ENCODE measurements at regions of chr15 and their contacts with region 1.

Region 1: DNA sequence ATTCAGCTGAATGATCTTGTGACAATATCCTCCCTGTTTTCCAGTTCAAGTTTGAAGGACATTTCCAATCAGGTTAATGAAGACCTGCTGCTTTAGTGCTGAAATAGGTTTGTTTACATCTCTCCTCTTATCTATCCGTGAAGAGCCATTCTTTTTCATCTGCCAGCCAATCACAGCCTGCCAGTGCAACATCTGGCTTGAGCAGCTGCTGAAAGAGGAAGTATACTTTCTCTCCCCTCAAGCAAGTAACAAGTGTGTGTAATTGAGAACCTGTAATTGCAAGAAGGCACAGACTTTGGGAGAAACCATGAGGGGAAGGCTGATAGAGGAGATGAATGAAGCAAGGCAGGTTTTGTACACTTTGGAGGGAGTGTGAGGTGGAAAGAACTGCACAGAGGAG is 404.3 kb downstream of the AGBL1 start:
- DNase-seq: no peak
- ATAC-seq: no peak
- H3K4me3 ChIP-seq: no peak overlapping the region
- H3K27ac ChIP-seq: no peak overlapping the region
- H3K4me1 ChIP-seq: no peaks in the 10 kb centered on the region
- H3K27me3 ChIP-seq: no peaks in the 10 kb centered on the region
- CTCF ChIP-seq: no peak
- EP300 ChIP-seq: no peak
- POLR2A ChIP-seq: no peak
- RAD21 ChIP-seq: no peak

Region 2: DNA sequence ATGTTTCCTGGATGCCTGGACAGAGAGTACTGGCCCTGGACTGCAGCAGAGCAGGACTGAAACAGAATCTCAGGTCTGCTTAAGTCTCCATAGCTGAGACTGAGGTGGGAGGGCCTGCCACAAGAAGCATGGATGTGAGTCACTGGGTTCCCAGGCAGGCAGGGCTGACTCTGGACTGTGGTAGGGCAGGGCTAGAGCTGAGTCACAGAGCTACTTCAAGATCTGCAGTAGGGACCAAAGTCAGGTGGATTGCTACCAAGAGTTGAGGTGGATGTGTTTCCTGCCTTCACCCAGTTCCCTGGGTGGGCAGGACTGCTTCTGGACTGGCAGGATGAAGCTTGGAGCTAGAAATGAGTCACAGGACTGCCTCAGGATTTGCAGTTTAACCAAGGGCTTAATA is 121.4 kb before region 1 on chr15:
- CTCF ChIA-PET with region 1: no interaction called
- POLR2A ChIA-PET with region 1: no interaction called
- RAD21 ChIA-PET with region 1: no interaction called
- SMC1A ChIA-PET with region 1: no interaction called
- in situ Hi-C with region 1: no loop called
- intact Hi-C with region 1: no loop called
- DNase-seq: no peak
- ATAC-seq: no peak
- H3K4me3 ChIP-seq: no peak overlapping the region
- H3K27ac ChIP-seq: no peak overlapping the region
- H3K4me1 ChIP-seq: no peaks in the 10 kb centered on the region
- H3K27me3 ChIP-seq: no peaks in the 10 kb centered on the region
- CTCF ChIP-seq: no peak
- EP300 ChIP-seq: no peak
- POLR2A ChIP-seq: no peak
- RAD21 ChIP-seq: no peak

Region 3: GRCh38 chr15:86399041-86399954 is 84.6 kb before region 1 on chr15:
- CTCF ChIA-PET with region 1: no interaction called
- POLR2A ChIA-PET with region 1: no interaction called
- RAD21 ChIA-PET with region 1: no interaction called
- SMC1A ChIA-PET with region 1: no interaction called
- in situ Hi-C with region 1: loop called (anchors 25 kb)
- intact Hi-C with region 1: no loop called
- DNase-seq: no peak
- ATAC-seq: no peak
- H3K4me3 ChIP-seq: no peak overlapping the region
- H3K27ac ChIP-seq: no peak overlapping the region
- H3K4me1 ChIP-seq: no peaks in the 10 kb centered on the region
- H3K27me3 ChIP-seq: no peaks in the 10 kb centered on the region
- CTCF ChIP-seq: no peak
- EP300 ChIP-seq: no peak
- POLR2A ChIP-seq: no peak
- RAD21 ChIP-seq: no peak

Region 4: GRCh38 chr15:86677278-86677677 is 193.3 kb after region 1 on chr15:
- CTCF ChIA-PET with region 1: no interaction called
- POLR2A ChIA-PET with region 1: no interaction called
- RAD21 ChIA-PET with region 1: no interaction called
- SMC1A ChIA-PET with region 1: no interaction called
- in situ Hi-C with region 1: no loop called
- intact Hi-C with region 1: no loop called
- DNase-seq: no peak
- ATAC-seq: no peak
- H3K4me3 ChIP-seq: no peak overlapping the region
- H3K27ac ChIP-seq: no peak overlapping the region
- H3K4me1 ChIP-seq: no peaks in the 10 kb centered on the region
- H3K27me3 ChIP-seq: no peaks in the 10 kb centered on the region
- CTCF ChIP-seq: no peak
- EP300 ChIP-seq: no peak
- POLR2A ChIP-seq: no peak
- RAD21 ChIP-seq: no peak

Measured in GM12878 (cell line).